Sigmoid colon (tissue), 7 donors: ENCODE measurements at regions of chr2 and their contacts with region 1.

Region 1: DNA sequence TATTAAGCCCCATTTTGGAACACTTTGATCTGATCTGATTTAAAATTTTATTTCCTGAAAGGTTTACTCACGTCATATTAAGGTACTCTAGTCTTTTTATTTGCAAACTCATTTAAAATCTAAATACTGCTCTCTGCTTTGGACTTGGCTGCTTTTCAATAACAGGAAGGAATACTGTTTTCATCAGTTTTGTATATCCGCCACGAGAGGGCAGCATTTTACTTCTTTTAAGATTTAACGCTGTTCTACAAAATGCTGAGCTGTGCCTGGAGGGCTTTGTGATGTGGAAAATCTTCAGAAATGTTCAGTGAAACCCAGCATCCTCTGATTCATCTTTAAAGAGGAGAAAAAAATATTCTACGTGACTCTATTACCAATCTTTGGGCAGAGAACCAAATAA is 37.5 kb upstream of the SLC38A11 start:
- DNase-seq: peak; percentile 74
- H3K4me3 ChIP-seq: no peak overlapping the region
- H3K27ac ChIP-seq: peak overlapping the region in 1 of 4 donors; percentile 70
- H3K4me1 ChIP-seq: peaks cover 0 to 20% (median 13%) of the 10 kb centered on the region in 4 donors
- H3K27me3 ChIP-seq: no peaks in the 10 kb centered on the region
- CTCF ChIP-seq: peak in 2 of 4 experiments; percentile 19 to 58
- EP300 ChIP-seq: no peak
- POLR2A ChIP-seq: no peak

Region 2: DNA sequence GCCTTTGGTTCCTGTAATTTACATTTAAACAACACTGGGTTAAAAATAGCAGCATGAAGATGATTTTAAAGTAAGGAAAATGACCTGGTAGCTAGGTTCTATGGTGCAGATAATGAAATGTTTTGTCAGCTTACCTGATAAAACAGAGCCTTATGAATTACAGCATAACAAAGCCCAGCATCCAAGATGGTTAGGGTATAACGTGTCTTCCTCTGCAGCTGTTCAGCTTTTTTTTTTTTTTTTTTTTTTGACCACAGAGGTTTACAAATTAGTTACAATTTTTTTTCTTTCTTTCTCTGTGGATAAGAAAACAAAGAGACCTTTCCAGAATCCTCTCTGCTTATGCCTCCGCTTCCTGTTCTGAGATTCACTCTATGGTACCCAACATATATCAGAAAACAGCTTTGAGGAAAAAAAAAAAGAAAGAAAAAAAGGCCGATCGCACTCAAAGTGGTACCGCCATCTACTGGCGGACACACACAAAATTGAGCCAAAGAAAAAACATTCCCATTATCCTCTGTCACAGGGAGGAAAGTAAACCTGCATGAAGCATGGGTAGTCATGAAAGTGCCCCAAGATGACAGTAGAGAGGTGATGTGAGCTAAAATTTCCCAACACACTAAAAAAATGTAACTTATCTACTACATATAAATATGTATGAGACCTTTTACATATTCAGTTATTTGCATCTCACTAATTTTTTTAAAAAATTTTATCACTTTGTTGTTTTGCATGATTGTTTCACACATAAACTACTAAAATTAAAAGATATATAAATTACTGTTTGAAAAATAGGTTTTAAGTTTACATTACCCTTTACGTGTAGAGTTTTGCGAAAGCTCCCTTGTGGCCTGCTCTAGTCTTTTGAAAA is 211.1 kb after region 1 on chr2 and contains the start of gene SCN3A:
- intact Hi-C with region 1: loop called (anchors 10 kb)
- DNase-seq: no peak
- H3K4me3 ChIP-seq: no peak within 1 kb of the TSS
- H3K27ac ChIP-seq: no peak within 1 kb of the TSS
- H3K4me1 ChIP-seq: no peaks in the 10 kb centered on the region
- H3K27me3 ChIP-seq: no peaks in the 10 kb centered on the region
- CTCF ChIP-seq: peak in 1 of 4 experiments; percentile 55
- EP300 ChIP-seq: no peak
- POLR2A ChIP-seq: no peak
- total RNA-seq, gene SCN3A: 2.0 to 4.3 (median 2.9) TPM

Region 3: GRCh38 chr2:165293440-165294353 is 300.9 kb after region 1 on chr2:
- intact Hi-C with region 1: loop called (anchors 2 kb)
- DNase-seq: no peak
- H3K4me3 ChIP-seq: peak overlapping the region; percentile 7 to 20 (median 8)
- H3K27ac ChIP-seq: no peak overlapping the region
- H3K4me1 ChIP-seq: peaks cover 0 to 3% (median 0%) of the 10 kb centered on the region in 4 donors
- H3K27me3 ChIP-seq: no peaks in the 10 kb centered on the region
- CTCF ChIP-seq: peak in 3 of 4 experiments; percentile 33 to 59 (median 34)
- EP300 ChIP-seq: no peak
- POLR2A ChIP-seq: no peak